Activated CD4-positive, alpha-beta memory T cell treated with anti-CD3 and anti-CD28 coated beads, Interleukin-2, amount 10 ng/mL, durations not matched to agents 7 days and 5 days (primary cell): ENCODE measurements at regions of chr1 and their contacts with region 1.

Region 1: GRCh38 chr1:11907275-11908094 is 18.7 kb downstream of the KIAA2013 start:
- DNase-seq: peak; percentile 93
- H3K4me3 Mint-ChIP-seq: peak overlapping the region; percentile 81
- H3K27ac Mint-ChIP-seq: peak overlapping the region; percentile 98
- H3K4me1 Mint-ChIP-seq: peaks cover 46% of the 10 kb centered on the region
- H3K27me3 Mint-ChIP-seq: peaks cover 16% of the 10 kb centered on the region

Region 2: GRCh38 chr1:11634365-11635192 is 272.9 kb before region 1 on chr1:
- CTCF ChIA-PET with region 1: no interaction called
- POLR2A ChIA-PET with region 1: no interaction called
- DNase-seq: no peak
- H3K4me3 Mint-ChIP-seq: no peak overlapping the region
- H3K27ac Mint-ChIP-seq: no peak overlapping the region
- H3K4me1 Mint-ChIP-seq: no peaks in the 10 kb centered on the region
- H3K27me3 Mint-ChIP-seq: peaks cover 15% of the 10 kb centered on the region

Region 3: GRCh38 chr1:11735854-11736745 is 171.4 kb before region 1 on chr1 and contains the start of gene AGTRAP:
- CTCF ChIA-PET with region 1: interaction called, 3 read pairs
- POLR2A ChIA-PET with region 1: interaction called, 41 read pairs
- DNase-seq: peak; percentile 92
- H3K4me3 Mint-ChIP-seq: peak within 1 kb of the TSS; percentile 98
- H3K27ac Mint-ChIP-seq: peak within 1 kb of the TSS; percentile 86
- H3K4me1 Mint-ChIP-seq: peaks cover 69% of the 10 kb centered on the region
- H3K27me3 Mint-ChIP-seq: no peaks in the 10 kb centered on the region
- total RNA-seq, gene AGTRAP: 52.7 to 57.3 TPM

Region 4: GRCh38 chr1:11918779-11919519 is 11.5 kb after region 1 on chr1:
- CTCF ChIA-PET with region 1: no interaction called
- POLR2A ChIA-PET with region 1: interaction called, 166 read pairs
- DNase-seq: no peak
- H3K4me3 Mint-ChIP-seq: no peak overlapping the region
- H3K27ac Mint-ChIP-seq: no peak overlapping the region
- H3K4me1 Mint-ChIP-seq: peaks cover 24% of the 10 kb centered on the region
- H3K27me3 Mint-ChIP-seq: no peaks in the 10 kb centered on the region

Region 5: DNA sequence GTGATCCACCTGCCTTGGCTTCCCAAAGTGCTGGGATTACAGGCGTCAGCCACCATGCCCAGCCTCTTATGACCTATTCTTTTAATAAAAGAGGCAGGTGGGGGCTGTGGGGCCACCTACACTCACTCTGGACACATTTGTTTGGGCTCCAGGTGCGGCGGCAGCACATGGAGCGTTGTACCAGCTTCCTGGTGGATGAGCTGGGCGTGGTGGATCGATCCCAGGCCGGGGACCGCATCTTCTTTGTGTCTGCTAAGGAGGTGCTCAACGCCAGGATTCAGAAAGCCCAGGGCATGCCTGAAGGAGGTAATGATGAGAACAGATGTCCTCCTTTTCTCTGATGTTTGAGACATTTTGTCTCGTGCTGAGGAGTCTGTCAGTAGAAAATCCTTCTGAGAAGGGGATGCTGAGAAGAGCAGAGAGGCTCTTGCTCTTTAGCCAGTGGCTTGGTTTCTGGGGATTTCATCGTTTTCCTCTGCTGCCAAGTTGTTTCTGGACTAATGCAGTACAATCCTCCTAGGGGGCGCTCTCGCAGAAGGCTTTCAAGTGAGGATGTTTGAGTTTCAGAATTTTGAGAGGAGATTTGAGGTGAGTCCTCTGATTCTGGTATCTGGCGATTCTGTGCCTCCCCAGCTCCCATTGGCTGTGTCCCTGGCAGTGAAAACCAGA is 93.9 kb after region 1 on chr1:
- CTCF ChIA-PET with region 1: interaction called, 3 read pairs
- POLR2A ChIA-PET with region 1: interaction called, 30 read pairs
- DNase-seq: peak; percentile 76
- H3K4me3 Mint-ChIP-seq: no peak overlapping the region
- H3K27ac Mint-ChIP-seq: peak overlapping the region; percentile 56
- H3K4me1 Mint-ChIP-seq: peaks cover 27% of the 10 kb centered on the region
- H3K27me3 Mint-ChIP-seq: no peaks in the 10 kb centered on the region

Region 6: DNA sequence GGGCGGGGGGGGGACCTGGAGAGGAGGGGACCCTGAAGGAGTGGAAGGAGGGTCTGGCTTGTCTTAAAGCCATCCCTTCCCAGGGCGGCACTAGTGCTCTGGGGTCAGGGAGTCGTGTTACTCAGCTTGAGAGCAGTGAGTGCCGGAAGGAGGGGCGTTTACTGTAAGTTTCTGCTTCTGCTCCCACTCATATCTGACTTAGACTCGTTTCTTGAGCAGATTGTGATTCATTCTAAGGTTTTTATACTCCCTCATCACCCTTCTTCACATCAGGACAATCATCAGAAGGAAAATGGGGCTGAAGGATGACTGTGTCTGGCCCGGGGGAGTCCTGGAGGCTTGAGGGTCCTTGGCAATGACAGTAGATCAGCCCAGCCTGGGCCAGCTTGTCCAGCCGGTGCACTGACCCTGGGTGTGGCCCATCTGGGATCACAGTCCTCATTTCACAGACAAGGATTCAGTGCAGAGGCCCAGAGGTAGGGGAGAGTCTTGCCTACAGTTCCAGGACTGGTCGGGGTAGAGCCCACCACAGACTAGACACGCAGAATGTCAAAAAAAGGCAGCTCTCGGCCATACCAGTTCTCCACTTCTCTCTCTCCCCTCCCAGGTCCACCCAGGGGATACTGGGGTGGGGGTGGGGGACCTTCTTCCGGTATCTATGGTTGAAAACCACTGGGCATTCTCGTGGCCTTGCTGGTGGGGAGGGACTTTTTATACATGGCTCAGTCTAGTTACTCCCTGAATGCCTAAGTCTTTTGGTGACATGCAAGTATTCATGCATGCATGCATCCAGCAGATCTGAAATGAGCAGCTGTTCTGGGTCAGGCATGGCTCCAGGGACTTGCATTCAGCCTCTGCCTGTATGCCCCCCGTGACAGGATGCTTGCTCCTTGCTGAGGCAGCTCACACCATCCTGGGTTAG is 160.7 kb after region 1 on chr1:
- CTCF ChIA-PET with region 1: interaction called, 5 read pairs
- POLR2A ChIA-PET with region 1: interaction called, 127 read pairs
- DNase-seq: peak; percentile 72
- H3K4me3 Mint-ChIP-seq: peak overlapping the region; percentile 74
- H3K27ac Mint-ChIP-seq: peak overlapping the region; percentile 96
- H3K4me1 Mint-ChIP-seq: peaks cover 78% of the 10 kb centered on the region
- H3K27me3 Mint-ChIP-seq: peaks cover 2% of the 10 kb centered on the region

Region 7: GRCh38 chr1:12177999-12178441 is 270.5 kb after region 1 on chr1:
- CTCF ChIA-PET with region 1: no interaction called
- POLR2A ChIA-PET with region 1: interaction called, 13 read pairs
- DNase-seq: peak; percentile 81
- H3K4me3 Mint-ChIP-seq: peak overlapping the region; percentile 68
- H3K27ac Mint-ChIP-seq: peak overlapping the region; percentile 94
- H3K4me1 Mint-ChIP-seq: peaks cover 91% of the 10 kb centered on the region
- H3K27me3 Mint-ChIP-seq: no peaks in the 10 kb centered on the region